ENCODE measurements at regions of chr2 and their contacts with region 1.

Region 1: DNA sequence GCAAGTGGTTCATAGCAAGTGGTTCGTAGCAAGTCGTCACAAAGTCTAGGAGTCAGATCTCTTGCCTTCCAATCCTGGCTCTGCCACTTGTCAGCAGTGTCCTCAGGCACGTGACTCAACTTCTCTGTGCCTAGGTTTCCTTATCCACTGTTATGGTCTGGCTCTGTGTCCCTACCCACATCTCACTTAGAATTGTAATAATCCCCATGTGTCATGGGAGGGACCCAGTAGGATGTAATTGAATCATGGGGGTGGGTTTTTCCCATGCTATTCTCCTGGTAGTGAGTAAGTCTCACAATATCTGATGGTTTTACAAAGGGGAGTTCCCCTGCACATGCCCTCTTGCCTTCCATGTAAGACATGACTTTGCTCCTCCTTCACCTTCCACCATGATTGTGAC is 51.8 kb upstream of the AP1S3 start:
- DNase-seq: no peak
- ATAC-seq: no peak
- H3K4me3 ChIP-seq: no peak overlapping the region
- H3K27ac ChIP-seq: no peak overlapping the region
- H3K4me1 ChIP-seq: no peaks in the 10 kb centered on the region
- H3K27me3 ChIP-seq: no peaks in the 10 kb centered on the region
- CTCF ChIP-seq: no peak

Region 2: GRCh38 chr2:223854741-223855140 is 34.5 kb before region 1 on chr2:
- CTCF ChIA-PET with region 1: no interaction called
- POLR2A ChIA-PET with region 1: no interaction called
- in situ Hi-C with region 1: no loop called
- intact Hi-C with region 1: no loop called
- DNase-seq: no peak
- ATAC-seq: no peak
- H3K4me3 ChIP-seq: no peak overlapping the region
- H3K27ac ChIP-seq: no peak overlapping the region
- H3K4me1 ChIP-seq: peaks cover 2% of the 10 kb centered on the region; the same call in 1 of the 2 replicates
- H3K27me3 ChIP-seq: no peaks in the 10 kb centered on the region
- CTCF ChIP-seq: no peak

Region 3: DNA sequence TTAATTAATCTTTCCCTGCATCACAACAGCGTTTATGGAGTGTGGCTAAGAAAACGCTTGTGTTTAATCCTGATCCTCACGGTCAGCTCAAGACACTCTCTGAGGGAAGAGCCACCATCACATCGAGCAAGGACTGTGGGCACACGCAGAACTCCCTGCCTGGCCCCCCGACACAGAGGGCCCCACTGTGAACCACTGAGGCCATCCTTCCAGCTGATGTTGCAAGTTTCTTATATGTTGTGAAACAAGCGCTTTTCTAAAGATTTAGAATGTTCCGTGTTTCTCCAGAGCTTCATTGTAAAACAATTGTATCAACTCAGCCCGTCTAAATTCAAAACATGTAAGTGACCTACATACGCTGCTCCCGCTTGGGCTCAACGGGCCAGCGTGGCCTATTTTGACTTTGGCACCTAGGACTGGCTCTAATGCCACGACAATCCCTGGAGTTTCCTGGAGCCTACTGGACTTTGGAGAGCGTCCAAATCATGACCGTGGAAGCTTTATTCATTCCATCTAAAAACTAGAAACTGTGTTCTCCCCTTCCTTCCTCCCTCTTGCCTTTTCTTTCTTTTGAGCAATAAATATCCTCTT is 115.0 kb after region 1 on chr2:
- CTCF ChIA-PET with region 1: no interaction called
- POLR2A ChIA-PET with region 1: interaction called, 10 read pairs
- in situ Hi-C with region 1: no loop called
- intact Hi-C with region 1: no loop called
- DNase-seq: no peak
- ATAC-seq: no peak
- H3K4me3 ChIP-seq: no peak overlapping the region
- H3K27ac ChIP-seq: no peak overlapping the region
- H3K4me1 ChIP-seq: no peaks in the 10 kb centered on the region
- H3K27me3 ChIP-seq: no peaks in the 10 kb centered on the region
- CTCF ChIP-seq: no peak

Region 4: GRCh38 chr2:225415792-225416191 is 1526.6 kb after region 1 on chr2:
- CTCF ChIA-PET with region 1: no interaction called
- POLR2A ChIA-PET with region 1: no interaction called
- in situ Hi-C with region 1: no loop called
- intact Hi-C with region 1: no loop called
- DNase-seq: no peak
- ATAC-seq: no peak
- H3K4me3 ChIP-seq: no peak overlapping the region
- H3K27ac ChIP-seq: no peak overlapping the region
- H3K4me1 ChIP-seq: no peaks in the 10 kb centered on the region
- H3K27me3 ChIP-seq: no peaks in the 10 kb centered on the region
- CTCF ChIP-seq: no peak

Measured in Panc1 (cell line).